Heart left ventricle (tissue), 16 donors: ENCODE measurements at regions of chr15 and their contacts with region 1.

Region 1: DNA sequence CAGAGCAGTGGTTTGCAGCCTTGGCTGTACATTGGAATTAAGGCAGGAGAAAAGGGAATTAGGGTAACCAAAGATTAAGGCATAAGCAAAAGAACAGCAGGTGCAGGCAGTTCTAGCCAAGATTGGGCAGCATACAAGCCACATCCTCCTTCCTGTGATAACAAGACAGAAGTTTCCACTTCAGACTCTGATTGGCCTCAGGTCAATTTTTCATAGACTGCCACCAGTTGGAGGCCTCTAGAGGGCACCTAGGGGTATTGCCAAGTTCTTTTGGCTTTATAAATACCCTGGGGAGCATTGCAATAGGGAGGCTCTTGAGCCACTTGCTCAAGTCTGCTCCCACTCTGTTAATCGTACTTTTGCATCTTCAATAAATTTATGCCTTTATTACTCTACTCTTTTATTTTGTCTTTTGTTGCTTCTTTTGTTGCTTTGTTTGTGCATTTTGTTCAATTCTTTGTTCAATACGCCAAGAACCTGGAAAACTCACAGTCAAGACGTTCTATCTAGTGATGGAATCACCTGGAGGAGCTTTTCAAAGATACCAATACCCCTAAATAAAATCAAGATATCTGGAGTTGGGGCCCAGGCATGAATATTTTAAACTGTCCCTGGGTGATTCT is 32.2 kb upstream of the FMN1 start:
- DNase-seq: peak in 4 of 5 donors; percentile 47 to 64 (median 54)
- ATAC-seq: peak; percentile 73 to 94 (median 88)
- H3K4me3 ChIP-seq: no peak overlapping the region
- H3K27ac ChIP-seq: no peak overlapping the region
- H3K4me1 ChIP-seq: peaks cover 0 to 9% (median 0%) of the 10 kb centered on the region in 12 donors
- H3K27me3 ChIP-seq: no peaks in the 10 kb centered on the region
- CTCF ChIP-seq: peak in 11 of 12 donors; percentile 7 to 51 (median 44)
- POLR2A ChIP-seq: no peak

Region 2: DNA sequence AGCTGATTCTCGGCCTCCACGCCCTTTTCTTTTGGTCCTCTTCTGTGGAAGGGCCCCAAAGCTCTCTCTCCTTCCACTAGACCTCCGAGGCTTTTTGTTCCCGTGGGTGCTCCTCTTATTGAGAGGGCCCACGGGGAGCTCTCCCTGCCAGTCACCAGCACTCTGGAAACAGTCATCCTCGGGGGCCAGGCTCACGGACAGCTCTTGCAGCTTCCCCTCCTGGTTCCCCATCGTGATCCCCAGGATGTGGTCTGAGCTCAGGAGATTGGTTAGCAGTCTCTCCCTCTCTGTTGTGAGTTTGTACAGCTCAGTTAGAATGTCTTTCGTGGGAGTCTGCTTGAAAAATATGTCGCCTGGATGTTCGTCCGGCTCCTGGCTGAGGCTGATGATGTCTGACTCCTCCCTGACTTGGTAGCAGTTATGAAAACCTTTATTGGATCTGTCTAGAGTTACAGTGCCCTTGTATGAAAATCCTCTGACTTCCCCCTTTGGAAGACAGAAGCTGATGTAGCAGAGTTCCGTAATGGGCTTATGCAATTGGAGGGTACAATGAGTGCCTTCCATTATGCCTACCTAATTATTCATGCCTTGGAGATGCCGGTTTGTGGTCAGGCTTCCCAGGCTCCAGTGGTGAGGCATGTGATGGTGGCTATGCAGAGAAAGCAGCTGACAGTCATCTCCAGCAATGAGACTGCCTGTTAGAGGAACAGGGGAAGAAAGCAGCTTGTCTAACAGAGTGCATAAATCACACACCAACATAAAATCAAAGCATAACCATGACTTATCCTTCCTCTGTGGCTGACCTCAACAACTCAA is 72.1 kb before region 1 on chr15:
- intact Hi-C with region 1: loop called in 1 of 10 experiments (anchors 10 kb)
- DNase-seq: peak; percentile 27 to 66 (median 46)
- ATAC-seq: peak; percentile 43 to 82 (median 66)
- H3K4me3 ChIP-seq: peak overlapping the region in 3 of 12 donors; percentile 11 to 49 (median 24)
- H3K27ac ChIP-seq: peak overlapping the region in 4 of 12 donors; percentile 1 to 86 (median 20)
- H3K4me1 ChIP-seq: peaks cover 0 to 58% (median 0%) of the 10 kb centered on the region in 12 donors
- H3K27me3 ChIP-seq: no peaks in the 10 kb centered on the region
- CTCF ChIP-seq: no peak
- POLR2A ChIP-seq: no peak

Region 3: GRCh38 chr15:33179874-33180273 is 46.8 kb before region 1 on chr15:
- intact Hi-C with region 1: loop called in 1 of 10 experiments (anchors 10 kb)
- DNase-seq: no peak
- ATAC-seq: no peak
- H3K4me3 ChIP-seq: no peak overlapping the region
- H3K27ac ChIP-seq: no peak overlapping the region
- H3K4me1 ChIP-seq: no peaks in the 10 kb centered on the region
- H3K27me3 ChIP-seq: no peaks in the 10 kb centered on the region
- CTCF ChIP-seq: no peak
- POLR2A ChIP-seq: no peak

Region 4: DNA sequence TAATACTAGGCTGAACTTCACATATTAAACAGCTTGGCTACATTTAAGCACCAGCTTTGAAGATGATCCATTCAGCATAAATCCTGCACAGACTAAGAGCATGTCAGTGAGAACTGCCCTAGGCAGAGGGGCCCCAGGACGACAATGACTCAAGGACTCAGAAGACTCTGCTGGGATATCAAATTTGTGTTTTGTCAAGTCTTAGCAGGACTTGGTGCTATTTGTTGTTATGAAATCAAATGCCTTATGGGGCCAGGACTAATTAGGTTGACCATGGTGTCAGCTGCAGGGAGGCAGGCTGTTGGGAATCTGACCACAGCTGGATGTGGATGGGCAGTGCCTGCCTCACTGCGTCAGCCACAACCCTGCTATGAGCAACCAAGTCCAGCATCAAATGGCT is 175.9 kb after region 1 on chr15:
- intact Hi-C with region 1: no loop called
- DNase-seq: no peak
- ATAC-seq: no peak
- H3K4me3 ChIP-seq: no peak overlapping the region
- H3K27ac ChIP-seq: no peak overlapping the region
- H3K4me1 ChIP-seq: no peaks in the 10 kb centered on the region
- H3K27me3 ChIP-seq: no peaks in the 10 kb centered on the region
- CTCF ChIP-seq: no peak
- POLR2A ChIP-seq: no peak

Region 5: DNA sequence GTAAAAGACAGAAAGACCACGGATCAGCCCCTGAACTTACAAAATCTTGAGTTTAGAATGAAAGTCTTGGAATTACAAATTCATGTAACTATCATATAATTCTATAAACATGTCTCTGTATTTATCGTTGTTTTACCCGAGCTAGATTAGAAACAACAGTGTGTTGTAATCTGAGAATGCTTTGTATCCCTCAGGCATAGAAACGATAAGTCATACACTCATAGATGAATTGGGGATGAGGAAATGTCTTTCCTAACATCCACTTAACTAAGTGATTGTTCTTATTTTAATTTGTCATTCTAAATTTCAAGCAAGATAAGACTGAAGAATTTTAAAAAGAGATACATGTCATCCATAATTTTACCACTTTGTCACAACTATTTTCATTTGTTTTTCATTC is 249.4 kb after region 1 on chr15:
- intact Hi-C with region 1: no loop called
- DNase-seq: no peak
- ATAC-seq: no peak
- H3K4me3 ChIP-seq: no peak overlapping the region
- H3K27ac ChIP-seq: no peak overlapping the region
- H3K4me1 ChIP-seq: no peaks in the 10 kb centered on the region
- H3K27me3 ChIP-seq: no peaks in the 10 kb centered on the region
- CTCF ChIP-seq: no peak
- POLR2A ChIP-seq: no peak